ENCODE measurements at regions of chr16 and their contacts with region 1.

Region 1: DNA sequence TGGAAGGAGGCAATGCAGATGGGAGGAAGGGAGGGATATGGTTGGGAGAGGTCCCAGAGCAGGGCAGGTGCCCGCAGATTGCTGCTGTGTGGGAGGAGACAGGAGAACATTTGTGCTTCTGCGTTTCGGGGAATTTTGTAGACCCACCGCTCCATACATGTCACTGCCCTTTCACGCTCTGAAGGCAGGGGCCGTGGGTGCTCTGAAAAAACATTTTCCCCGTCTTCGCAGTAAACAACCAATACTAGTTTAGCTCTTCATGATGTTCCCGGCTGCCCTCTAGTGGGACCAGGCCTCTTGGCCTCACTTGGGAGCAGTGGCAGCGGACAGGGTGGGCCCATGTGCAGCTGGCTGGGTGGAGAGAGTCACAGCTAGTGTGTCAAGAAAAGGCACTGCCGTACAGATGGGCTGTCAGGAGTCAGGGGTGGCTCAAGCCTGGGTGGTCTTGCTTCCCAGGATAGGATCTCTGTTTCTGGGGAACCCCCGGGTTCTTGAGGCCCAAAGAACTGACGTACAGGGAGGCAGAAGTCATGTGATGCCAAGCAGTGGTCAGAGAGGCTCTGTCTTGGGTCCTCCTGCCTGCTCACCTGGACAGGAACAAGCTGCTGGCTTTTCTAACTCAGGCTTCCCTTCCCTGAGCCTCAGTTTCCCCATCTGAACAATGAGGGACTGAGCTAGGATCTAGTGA is 46.5 kb upstream of the CPNE2 start:
- DNase-seq: no peak
- H3K4me3 Mint-ChIP-seq: no peak overlapping the region
- H3K27ac Mint-ChIP-seq: no peak overlapping the region
- H3K4me1 Mint-ChIP-seq: peaks cover 33% of the 10 kb centered on the region
- H3K27me3 Mint-ChIP-seq: no peaks in the 10 kb centered on the region

Region 2: DNA sequence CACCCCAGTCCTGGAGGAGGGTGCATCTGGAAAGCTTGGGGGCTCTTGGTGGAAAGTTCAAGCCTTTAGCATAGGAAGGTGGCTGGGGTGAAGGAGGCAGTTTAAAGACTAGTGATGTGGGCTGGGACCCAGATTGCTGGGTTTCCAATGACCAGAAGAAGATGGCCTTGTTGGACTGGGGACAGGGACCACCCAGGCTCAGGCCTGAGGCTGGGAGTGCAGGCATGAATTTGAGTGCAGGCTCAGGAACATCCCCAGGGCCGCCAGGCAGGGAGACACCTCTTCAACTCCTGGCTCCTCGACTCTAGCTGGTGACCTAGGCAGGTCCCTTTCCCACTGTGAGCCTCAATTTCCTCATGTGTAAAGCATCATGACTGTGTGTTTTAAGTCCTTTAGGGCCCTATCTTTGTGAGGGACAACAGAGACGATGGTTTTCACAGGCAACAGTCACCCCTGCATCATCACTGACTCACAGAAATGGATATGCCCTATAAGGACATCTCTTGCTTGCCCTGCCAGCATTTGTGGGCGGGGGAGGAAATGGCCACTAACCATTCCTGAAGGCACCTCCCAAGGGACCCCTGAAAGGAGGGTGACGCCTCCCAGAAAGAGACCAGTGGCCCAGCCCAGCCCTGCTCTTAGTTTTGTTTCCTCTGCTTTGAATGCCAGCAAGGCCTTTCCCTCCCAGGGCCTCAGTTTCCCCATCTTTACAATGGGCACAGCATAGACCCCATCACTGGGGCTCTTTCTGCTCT is 45.4 kb before region 1 on chr16:
- CTCF ChIA-PET with region 1: no interaction called
- POLR2A ChIA-PET with region 1: interaction called, 15 read pairs
- DNase-seq: peak; percentile 65
- H3K4me3 Mint-ChIP-seq: peak overlapping the region; percentile 34
- H3K27ac Mint-ChIP-seq: peak overlapping the region; percentile 90
- H3K4me1 Mint-ChIP-seq: peaks cover 92% of the 10 kb centered on the region
- H3K27me3 Mint-ChIP-seq: no peaks in the 10 kb centered on the region

Region 3: GRCh38 chr16:57032931-57033330 is 12.9 kb before region 1 on chr16:
- CTCF ChIA-PET with region 1: interaction called, 3 read pairs
- POLR2A ChIA-PET with region 1: interaction called, 10 read pairs
- DNase-seq: no peak
- H3K4me3 Mint-ChIP-seq: no peak overlapping the region
- H3K27ac Mint-ChIP-seq: peak overlapping the region; percentile 40
- H3K4me1 Mint-ChIP-seq: peaks cover 39% of the 10 kb centered on the region
- H3K27me3 Mint-ChIP-seq: no peaks in the 10 kb centered on the region

Region 4: DNA sequence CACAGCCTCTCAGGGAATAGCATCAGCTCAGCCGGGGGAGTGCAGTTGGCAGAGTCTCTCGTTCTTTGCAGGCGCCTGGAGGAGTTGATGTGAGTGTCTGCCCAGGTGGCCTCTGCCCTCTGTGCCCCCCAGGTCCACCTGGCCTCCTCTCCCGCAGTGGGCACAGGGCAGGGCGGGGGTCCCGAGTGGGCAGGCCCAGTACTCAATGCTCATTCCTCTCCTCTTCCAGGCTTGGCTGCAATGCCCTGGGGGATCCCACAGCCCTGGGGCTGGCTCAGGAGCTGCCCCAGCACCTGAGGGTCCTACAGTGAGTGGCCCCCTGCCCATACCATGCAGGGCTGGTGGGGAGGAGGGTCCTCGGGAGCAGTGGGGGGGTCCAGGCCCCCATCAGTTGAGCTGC is 31.9 kb after region 1 on chr16:
- CTCF ChIA-PET with region 1: no interaction called
- POLR2A ChIA-PET with region 1: no interaction called
- DNase-seq: no peak
- H3K4me3 Mint-ChIP-seq: no peak overlapping the region
- H3K27ac Mint-ChIP-seq: no peak overlapping the region
- H3K4me1 Mint-ChIP-seq: no peaks in the 10 kb centered on the region
- H3K27me3 Mint-ChIP-seq: no peaks in the 10 kb centered on the region